ENCODE measurements at regions of chr17 and their contacts with region 1.

Region 1: DNA sequence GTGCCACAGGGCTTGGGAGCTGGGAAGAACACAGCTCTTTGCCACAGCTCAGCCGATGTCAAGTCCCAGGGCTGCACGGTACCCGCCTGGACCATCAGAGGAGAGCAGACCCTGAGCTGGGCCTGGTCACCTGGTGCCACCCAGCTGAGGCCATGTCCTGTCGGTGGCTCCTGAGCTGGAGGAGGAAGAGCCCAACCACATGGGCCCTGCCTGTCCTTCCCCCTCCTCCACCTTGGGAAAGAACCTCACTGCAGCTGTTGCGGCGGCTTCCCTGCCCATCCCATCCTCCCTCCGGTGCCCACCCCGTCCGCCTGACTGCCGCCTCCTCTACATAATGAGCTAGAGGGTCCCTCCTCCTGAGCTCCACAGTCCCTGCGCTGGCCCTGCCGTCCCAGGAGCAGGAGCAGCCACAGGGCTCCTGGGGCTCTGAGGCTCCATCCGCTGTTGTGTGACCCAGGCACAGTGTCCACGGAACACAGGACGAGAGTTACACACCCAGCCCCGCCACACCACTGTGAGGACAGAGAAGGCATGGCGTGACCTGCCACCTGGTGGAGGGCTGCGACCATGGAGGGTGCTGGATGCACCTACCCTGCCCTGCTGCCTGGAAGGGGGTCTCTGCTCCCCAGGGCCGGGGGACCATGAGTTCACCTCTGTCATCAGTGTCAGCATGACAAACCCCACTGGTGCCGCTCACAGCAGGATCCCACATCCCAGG is 21.4 kb upstream of the CHMP6 start:
- DNase-seq: peak; percentile 70
- ATAC-seq: peak; percentile 82
- H3K4me3 ChIP-seq: peak overlapping the region in 3 of 5 experiments; percentile 14 to 39 (median 20)
- H3K4me3 Mint-ChIP-seq: peak overlapping the region; percentile 68
- H3K27ac ChIP-seq: no peak overlapping the region
- H3K27ac Mint-ChIP-seq: peak overlapping the region; percentile 80
- H3K4me1 ChIP-seq: peaks cover 24 to 29% of the 10 kb centered on the region in 2 donors
- H3K4me1 Mint-ChIP-seq: peaks cover 11% of the 10 kb centered on the region
- H3K27me3 ChIP-seq: peaks cover 0 to 11% (median 3%) of the 10 kb centered on the region in 4 experiments
- H3K27me3 Mint-ChIP-seq: peaks cover 4% of the 10 kb centered on the region
- CTCF ChIP-seq: peak; percentile 69

Region 2: GRCh38 chr17:80426681-80427326 is 543.4 kb before region 1 on chr17:
- CTCF ChIA-PET with region 1: interaction called, 30 read pairs
- POLR2A ChIA-PET with region 1: no interaction called
- intact Hi-C with region 1: no loop called
- DNase-seq: peak; percentile 90
- ATAC-seq: peak; percentile 96
- H3K4me3 ChIP-seq: no peak overlapping the region
- H3K4me3 Mint-ChIP-seq: no peak overlapping the region
- H3K27ac ChIP-seq: no peak overlapping the region
- H3K27ac Mint-ChIP-seq: no peak overlapping the region
- H3K4me1 ChIP-seq: peaks cover 37 to 39% of the 10 kb centered on the region in 2 donors
- H3K4me1 Mint-ChIP-seq: peaks cover 27% of the 10 kb centered on the region
- H3K27me3 ChIP-seq: peaks cover 0 to 3% (median 0%) of the 10 kb centered on the region in 4 experiments
- H3K27me3 Mint-ChIP-seq: no peaks in the 10 kb centered on the region
- CTCF ChIP-seq: peak; percentile 95

Region 3: GRCh38 chr17:80866147-80866793 is 103.9 kb before region 1 on chr17:
- CTCF ChIA-PET with region 1: interaction called, 30 read pairs
- POLR2A ChIA-PET with region 1: no interaction called
- intact Hi-C with region 1: loop called (anchors 1 kb)
- DNase-seq: peak; percentile 71
- ATAC-seq: peak; percentile 85
- H3K4me3 ChIP-seq: no peak overlapping the region
- H3K4me3 Mint-ChIP-seq: no peak overlapping the region
- H3K27ac ChIP-seq: no peak overlapping the region
- H3K27ac Mint-ChIP-seq: no peak overlapping the region
- H3K4me1 ChIP-seq: peaks cover 6 to 10% of the 10 kb centered on the region in 2 donors
- H3K4me1 Mint-ChIP-seq: peaks cover 24% of the 10 kb centered on the region
- H3K27me3 ChIP-seq: no peaks in the 10 kb centered on the region
- H3K27me3 Mint-ChIP-seq: no peaks in the 10 kb centered on the region
- CTCF ChIP-seq: peak; percentile 75

Region 4: GRCh38 chr17:80899402-80900268 is 70.6 kb before region 1 on chr17:
- CTCF ChIA-PET with region 1: interaction called, 13 read pairs
- POLR2A ChIA-PET with region 1: no interaction called
- intact Hi-C with region 1: no loop called
- DNase-seq: peak; percentile 44
- ATAC-seq: no peak
- H3K4me3 ChIP-seq: no peak overlapping the region
- H3K4me3 Mint-ChIP-seq: no peak overlapping the region
- H3K27ac ChIP-seq: peak overlapping the region in 1 of 2 donors; percentile 91
- H3K27ac Mint-ChIP-seq: peak overlapping the region; percentile 15
- H3K4me1 ChIP-seq: peaks cover 29 to 30% of the 10 kb centered on the region in 2 donors
- H3K4me1 Mint-ChIP-seq: peaks cover 22% of the 10 kb centered on the region
- H3K27me3 ChIP-seq: no peaks in the 10 kb centered on the region
- H3K27me3 Mint-ChIP-seq: no peaks in the 10 kb centered on the region
- CTCF ChIP-seq: peak; percentile 47

Region 5: DNA sequence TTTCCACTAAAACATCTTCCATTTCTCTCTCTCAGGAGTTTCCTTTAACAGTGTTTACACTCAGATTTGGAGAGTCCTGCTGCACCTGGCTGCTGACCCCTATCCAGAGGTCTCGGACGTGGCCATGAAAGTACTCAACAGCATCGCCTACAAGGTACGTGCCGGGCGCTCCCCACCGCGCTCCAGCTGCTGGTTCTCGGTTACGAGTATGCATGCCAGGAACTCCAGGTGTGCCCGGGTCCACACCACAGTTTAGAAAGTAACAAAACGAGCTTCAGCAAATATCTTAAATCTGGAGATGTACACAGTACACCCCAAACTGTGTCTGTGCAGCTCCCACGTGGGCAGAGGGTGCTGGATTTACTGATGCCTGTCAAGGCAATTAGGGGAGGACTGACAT is 61.4 kb before region 1 on chr17:
- CTCF ChIA-PET with region 1: interaction called, 22 read pairs
- POLR2A ChIA-PET with region 1: interaction called, 3 read pairs
- intact Hi-C with region 1: no loop called
- DNase-seq: no peak
- ATAC-seq: no peak
- H3K4me3 ChIP-seq: no peak overlapping the region
- H3K4me3 Mint-ChIP-seq: no peak overlapping the region
- H3K27ac ChIP-seq: peak overlapping the region in 1 of 2 donors; percentile 100
- H3K27ac Mint-ChIP-seq: peak overlapping the region; percentile 68
- H3K4me1 ChIP-seq: peaks cover 50 to 57% of the 10 kb centered on the region in 2 donors
- H3K4me1 Mint-ChIP-seq: peaks cover 46% of the 10 kb centered on the region
- H3K27me3 ChIP-seq: no peaks in the 10 kb centered on the region
- H3K27me3 Mint-ChIP-seq: no peaks in the 10 kb centered on the region
- CTCF ChIP-seq: no peak

Region 6: DNA sequence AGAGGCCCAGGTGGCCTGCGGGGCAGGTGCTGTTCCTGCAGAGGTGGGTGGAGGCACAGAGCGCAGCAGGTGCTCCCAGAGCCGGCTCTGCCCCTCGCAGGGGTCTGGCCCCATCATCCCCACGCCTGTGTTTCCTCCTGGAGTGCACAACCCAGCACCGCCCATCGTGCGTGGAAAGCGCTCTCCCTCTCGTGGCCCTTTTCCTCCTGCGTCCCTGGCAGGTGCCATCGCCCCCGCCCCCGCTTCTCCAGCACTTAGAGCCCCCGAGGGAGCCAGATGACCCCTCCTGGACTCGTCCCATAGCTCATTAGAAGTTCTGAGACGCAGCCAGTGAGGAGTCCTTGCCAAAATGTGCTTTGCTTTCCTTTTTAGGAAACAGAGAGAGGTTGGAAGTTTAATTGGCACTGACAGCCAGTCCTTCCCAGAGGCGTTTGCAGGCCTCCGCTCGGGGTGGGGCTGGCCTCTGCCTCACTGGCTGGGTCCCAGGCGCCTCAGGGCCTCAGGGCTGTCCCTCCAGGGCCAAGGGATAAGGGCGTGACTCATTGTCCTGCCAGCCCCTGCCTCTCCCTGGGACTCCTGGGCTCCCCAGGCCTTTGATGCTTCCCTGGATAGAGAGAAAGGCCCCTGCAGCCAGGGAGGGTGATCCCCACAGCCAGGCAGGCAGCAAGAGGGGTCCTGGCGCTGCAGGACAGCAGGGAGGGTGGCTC is 10.7 kb before region 1 on chr17:
- CTCF ChIA-PET with region 1: interaction called, 35 read pairs
- POLR2A ChIA-PET with region 1: interaction called, 7 read pairs
- intact Hi-C with region 1: loop called (anchors 1 kb)
- DNase-seq: no peak
- ATAC-seq: no peak
- H3K4me3 ChIP-seq: no peak overlapping the region
- H3K4me3 Mint-ChIP-seq: no peak overlapping the region
- H3K27ac ChIP-seq: no peak overlapping the region
- H3K27ac Mint-ChIP-seq: no peak overlapping the region
- H3K4me1 ChIP-seq: peaks cover 18 to 30% of the 10 kb centered on the region in 2 donors
- H3K4me1 Mint-ChIP-seq: peaks cover 16% of the 10 kb centered on the region
- H3K27me3 ChIP-seq: no peaks in the 10 kb centered on the region
- H3K27me3 Mint-ChIP-seq: no peaks in the 10 kb centered on the region
- CTCF ChIP-seq: no peak

Region 7: DNA sequence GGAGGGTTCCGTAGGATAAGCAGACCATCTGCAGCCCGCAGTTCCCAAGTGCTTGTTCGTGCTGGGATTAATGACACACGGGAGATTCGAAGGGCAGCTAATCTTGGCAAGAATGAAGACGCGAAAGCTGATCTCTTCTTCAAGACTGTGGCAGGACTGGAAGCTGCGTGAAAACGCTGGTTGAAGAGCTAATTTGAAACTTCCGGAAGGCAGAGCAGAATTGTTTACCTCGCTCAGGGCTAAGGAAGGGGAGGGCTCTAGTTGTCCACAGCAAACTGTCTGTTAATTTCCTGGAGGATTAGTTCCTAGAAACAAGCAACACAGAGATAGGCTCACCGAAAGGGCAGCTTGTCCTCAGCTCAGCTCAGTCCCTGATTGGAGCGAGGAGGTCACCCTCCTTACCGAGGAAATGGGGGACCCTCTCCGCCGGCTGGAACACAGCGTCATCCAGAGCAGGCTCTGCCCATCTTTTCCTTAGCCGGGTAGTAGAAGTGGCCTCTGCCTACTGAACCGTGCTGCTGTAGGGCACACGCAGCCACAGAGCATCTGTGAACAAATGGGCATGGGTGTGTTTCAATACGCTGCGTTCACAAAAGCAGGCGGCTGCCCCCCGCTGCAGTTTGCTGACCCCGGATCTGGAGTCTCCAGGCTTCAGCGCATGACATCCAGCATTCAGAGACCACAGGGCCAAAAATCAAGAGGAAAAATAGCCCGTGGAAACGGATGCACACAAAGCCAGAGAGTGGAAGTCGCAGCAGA is 48.0 kb after region 1 on chr17:
- CTCF ChIA-PET with region 1: no interaction called
- POLR2A ChIA-PET with region 1: no interaction called
- intact Hi-C with region 1: no loop called
- DNase-seq: peak; percentile 47
- ATAC-seq: peak; percentile 82
- H3K4me3 ChIP-seq: peak overlapping the region; percentile 48 to 76 (median 60)
- H3K4me3 Mint-ChIP-seq: peak overlapping the region; percentile 86
- H3K27ac ChIP-seq: peak overlapping the region; percentile 68 to 77
- H3K27ac Mint-ChIP-seq: peak overlapping the region; percentile 89
- H3K4me1 ChIP-seq: peaks cover 9 to 15% of the 10 kb centered on the region in 2 donors
- H3K4me1 Mint-ChIP-seq: peaks cover 16% of the 10 kb centered on the region
- H3K27me3 ChIP-seq: no peaks in the 10 kb centered on the region
- H3K27me3 Mint-ChIP-seq: no peaks in the 10 kb centered on the region
- CTCF ChIP-seq: no peak

Measured in B cell (primary cell).